Activated T-helper 2 cell treated with anti-CD3 and anti-CD28 coated beads, Interferon-gamma antibody, Interleukin-2, Interleukin-4, amounts not matched to agents 10 μg/mL and 5 μg/mL and 100 μg/mL, durations not matched to agents 14 hours and 24 hours and 36 hours (primary cell): ENCODE measurements at regions of chr5 and their contacts with region 1.

Region 1: DNA sequence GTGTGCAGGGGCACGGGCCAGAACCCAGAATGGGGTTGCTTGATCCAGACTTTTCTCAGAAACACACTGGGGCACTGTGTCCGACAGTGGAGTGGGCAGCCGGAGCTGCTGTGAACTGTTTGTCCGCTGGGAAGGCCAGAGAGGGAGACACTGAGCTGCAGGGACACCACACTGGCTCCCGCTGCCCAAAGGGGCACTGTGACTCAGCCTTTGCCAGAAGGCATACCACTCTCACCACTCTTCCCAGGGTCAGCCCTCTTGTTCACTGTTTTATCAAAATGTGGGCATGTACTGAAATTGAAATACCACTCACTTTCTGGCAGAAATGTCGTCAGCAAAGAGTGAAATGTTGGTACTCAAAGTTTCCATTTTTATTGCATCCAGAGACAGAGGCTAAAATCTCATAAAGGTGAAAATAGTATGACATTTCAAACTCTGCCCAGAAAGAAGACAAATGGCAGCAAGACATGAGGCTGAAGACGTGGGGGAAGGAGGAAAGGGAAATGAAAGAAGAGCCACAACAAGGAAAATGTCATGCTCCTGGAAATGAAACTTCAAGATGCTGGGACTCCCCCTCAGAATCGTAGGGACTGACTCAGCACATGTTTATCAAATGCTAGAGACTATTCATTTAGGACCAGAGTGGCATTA is 4.5 kb upstream of the IL7R start:
- DNase-seq: no peak
- H3K4me3 Mint-ChIP-seq: peak overlapping the region; percentile 85
- H3K27ac Mint-ChIP-seq: peak overlapping the region; percentile 96
- H3K4me1 Mint-ChIP-seq: peaks cover 61% of the 10 kb centered on the region
- H3K27me3 Mint-ChIP-seq: no peaks in the 10 kb centered on the region

Region 2: DNA sequence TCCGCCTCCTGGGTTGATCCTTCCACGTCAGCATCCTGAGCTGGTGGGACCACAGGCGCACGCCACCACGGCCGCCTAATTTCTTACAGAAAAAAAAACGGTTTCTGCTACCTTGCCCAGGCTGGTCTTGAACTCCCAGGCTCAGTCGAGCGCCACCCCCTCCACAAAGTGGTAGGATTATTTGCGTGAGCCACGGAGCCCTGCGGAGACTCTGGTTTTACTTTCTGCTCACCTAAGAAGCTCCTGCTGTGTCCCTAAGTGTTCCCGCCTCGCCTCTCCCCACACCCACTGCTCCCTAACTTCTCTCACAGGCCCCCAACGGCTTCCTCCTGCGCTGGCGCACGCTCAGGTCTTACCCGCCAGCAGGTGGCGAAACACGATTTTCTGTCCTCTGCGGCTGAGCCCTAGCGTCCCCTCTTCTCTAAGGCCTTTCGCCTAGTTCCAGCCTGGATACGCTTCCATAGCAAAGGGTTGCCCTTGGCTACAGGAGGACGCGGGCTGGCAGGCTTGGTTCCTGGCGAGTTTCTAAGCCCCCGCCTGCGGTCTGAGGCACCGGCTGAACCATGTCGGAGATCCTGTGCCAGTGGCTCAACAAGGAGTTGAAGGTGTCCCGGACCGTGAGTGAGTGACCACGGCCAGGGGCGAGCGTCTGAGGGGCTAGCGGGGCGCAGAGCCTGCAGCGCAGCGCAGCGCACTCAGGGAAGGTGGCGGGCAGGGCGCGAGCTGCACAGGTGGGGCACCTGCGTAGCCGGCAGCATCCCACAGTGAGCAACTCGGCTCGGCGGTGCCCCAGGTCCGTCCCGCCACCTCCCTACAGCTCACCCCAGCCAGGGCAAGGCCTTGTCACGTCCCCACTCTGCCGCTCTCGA is 234.5 kb before region 1 on chr5 and contains the start of gene SPEF2:
- intact Hi-C with region 1: loop called (anchors 1 kb)
- DNase-seq: peak; percentile 77
- H3K4me3 Mint-ChIP-seq: peak within 1 kb of the TSS; percentile 89
- H3K27ac Mint-ChIP-seq: peak within 1 kb of the TSS; percentile 95
- H3K4me1 Mint-ChIP-seq: peaks cover 28% of the 10 kb centered on the region
- H3K27me3 Mint-ChIP-seq: no peaks in the 10 kb centered on the region
- total RNA-seq, gene SPEF2: 10.0 and 11.5 TPM in 2 replicates

Region 3: GRCh38 chr5:35736280-35736679 is 115.9 kb before region 1 on chr5:
- intact Hi-C with region 1: loop called (anchors 2 kb)
- DNase-seq: no peak
- H3K4me3 Mint-ChIP-seq: no peak overlapping the region
- H3K27ac Mint-ChIP-seq: peak overlapping the region; percentile 69
- H3K4me1 Mint-ChIP-seq: peaks cover 22% of the 10 kb centered on the region
- H3K27me3 Mint-ChIP-seq: no peaks in the 10 kb centered on the region

Region 4: GRCh38 chr5:35811108-35811741 is 41.0 kb before region 1 on chr5:
- intact Hi-C with region 1: loop called (anchors 1 kb)
- DNase-seq: no peak
- H3K4me3 Mint-ChIP-seq: peak overlapping the region; percentile 27
- H3K27ac Mint-ChIP-seq: peak overlapping the region; percentile 94
- H3K4me1 Mint-ChIP-seq: peaks cover 47% of the 10 kb centered on the region
- H3K27me3 Mint-ChIP-seq: no peaks in the 10 kb centered on the region

Region 5: DNA sequence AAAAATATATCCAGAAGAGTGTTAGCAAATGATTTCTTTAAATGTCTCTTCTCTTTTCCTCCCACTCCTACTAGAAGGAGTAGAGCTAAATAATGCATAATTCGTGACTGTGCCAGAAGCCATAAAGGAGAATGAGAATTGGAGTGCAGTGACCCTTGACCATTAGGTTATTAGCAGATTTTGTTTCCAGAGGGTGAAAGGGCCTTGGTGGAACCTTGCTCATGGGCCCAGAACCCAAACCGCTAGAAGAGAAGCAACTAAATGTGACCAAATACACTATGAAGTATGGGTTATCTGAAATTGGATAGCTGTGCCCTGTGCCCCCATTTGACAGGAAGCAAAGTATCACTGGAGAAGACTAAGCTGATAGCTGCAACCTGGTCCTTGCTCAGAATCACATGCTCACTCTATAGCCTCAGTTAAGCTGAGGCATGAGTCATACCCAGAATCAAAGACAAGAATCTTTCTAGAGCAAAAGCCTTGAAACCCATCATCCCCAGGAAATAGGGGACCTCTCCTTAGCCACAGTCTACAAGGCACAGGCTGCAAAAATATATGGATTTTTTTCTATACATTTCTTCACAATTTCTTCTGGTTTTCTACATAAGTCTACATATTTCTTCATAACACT is 50.0 kb after region 1 on chr5:
- intact Hi-C with region 1: loop called (anchors 1 kb)
- DNase-seq: peak; percentile 49
- H3K4me3 Mint-ChIP-seq: peak overlapping the region; percentile 28
- H3K27ac Mint-ChIP-seq: peak overlapping the region; percentile 83
- H3K4me1 Mint-ChIP-seq: peaks cover 78% of the 10 kb centered on the region
- H3K27me3 Mint-ChIP-seq: no peaks in the 10 kb centered on the region

Region 6: DNA sequence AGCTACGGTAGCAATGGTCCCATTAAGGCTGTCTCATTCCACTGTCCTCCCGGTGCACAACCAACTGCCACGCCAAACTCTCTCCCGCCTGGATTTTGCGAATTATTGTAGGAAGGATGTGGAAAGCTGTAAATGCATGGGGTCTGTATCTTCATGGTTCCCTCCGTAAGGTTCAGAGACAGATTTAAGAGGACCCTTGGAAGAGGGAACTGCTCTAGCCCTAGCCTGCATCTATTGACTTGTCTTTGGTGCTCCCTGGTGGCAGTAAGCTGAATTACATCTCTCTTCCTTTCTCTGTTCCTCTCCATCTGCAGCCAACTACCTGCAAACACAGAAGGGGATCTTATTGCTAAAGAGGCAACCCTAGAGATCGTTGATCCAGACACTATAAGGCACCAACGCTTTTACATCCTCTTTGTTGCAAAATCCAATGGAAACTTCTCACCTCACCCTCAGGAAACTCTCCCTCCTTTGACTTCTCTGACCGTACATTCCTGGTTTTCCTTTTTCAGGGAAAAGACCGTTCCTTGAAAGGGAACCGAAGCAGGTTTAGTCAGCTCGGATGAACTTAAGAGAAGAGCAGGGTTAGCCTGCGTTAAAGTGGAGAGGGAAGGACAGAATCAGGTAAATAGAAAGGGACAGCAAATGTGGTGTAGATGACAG is 74.3 kb after region 1 on chr5:
- intact Hi-C with region 1: loop called (anchors 1 kb)
- DNase-seq: peak; percentile 45
- H3K4me3 Mint-ChIP-seq: peak overlapping the region; percentile 18
- H3K27ac Mint-ChIP-seq: no peak overlapping the region
- H3K4me1 Mint-ChIP-seq: peaks cover 37% of the 10 kb centered on the region
- H3K27me3 Mint-ChIP-seq: peaks cover 2% of the 10 kb centered on the region